ENCODE measurements at regions of chr1 and their contacts with region 1.

Region 1: DNA sequence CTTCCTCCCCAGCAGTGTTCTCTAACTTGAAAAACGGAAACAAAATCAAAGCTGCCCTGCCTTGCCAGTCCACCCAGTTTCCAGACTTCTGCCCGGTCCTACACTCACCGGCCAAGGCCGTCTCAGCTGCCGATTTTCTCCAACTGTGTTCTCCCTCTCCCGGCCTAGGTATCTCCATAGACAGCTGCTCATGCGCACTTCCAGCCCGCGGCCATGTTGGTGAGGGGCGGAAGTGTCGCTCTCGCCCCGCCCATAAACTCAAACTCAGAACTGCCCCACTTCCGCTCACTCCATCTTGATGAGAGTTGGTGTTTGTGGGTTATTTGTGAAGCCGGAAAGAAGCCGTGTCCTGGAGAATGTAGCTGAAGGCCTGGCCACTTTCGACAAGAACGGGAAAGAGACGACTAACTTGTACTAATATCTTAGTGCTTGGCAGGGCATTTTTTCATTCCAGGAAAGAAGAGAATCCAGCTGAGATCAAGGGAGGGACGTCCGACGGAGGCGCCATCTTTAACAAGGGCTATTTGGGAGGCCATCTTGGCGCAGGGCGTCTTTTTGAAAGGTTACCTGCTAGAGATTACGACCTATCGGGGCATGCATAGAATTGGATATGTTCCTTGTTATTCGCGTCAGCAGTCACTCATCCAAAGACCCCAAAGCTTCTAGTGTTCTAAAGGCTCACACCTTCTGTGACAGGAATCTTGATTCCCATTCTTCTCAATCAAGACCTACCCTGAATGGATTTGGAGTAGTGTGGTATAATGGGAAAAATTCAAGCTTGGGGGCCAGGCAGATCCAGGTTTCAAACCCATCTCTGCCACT is at the start of gene USF1:
- DNase-seq: peak; percentile 94 to 95 (median 95)
- H3K4me3 ChIP-seq: peak within 1 kb of the TSS; percentile 62 to 89
- H3K4me3 Mint-ChIP-seq: peak within 1 kb of the TSS; percentile 87 to 99 (median 94)
- H3K27ac ChIP-seq: peak within 1 kb of the TSS; percentile 91
- H3K27ac Mint-ChIP-seq: peak within 1 kb of the TSS; percentile 90 to 100 (median 99)
- H3K4me1 ChIP-seq: peaks cover 39% of the 10 kb centered on the region
- H3K4me1 Mint-ChIP-seq: peaks cover 29 to 58% (median 42%) of the 10 kb centered on the region in 4 donors
- H3K27me3 ChIP-seq: no peaks in the 10 kb centered on the region
- H3K27me3 Mint-ChIP-seq: no peaks in the 10 kb centered on the region
- total RNA-seq, gene USF1: 101 to 102 TPM

Region 2: GRCh38 chr1:160726498-160727315 is 319.3 kb before region 1 on chr1:
- CTCF ChIA-PET with region 1: no interaction called
- POLR2A ChIA-PET with region 1: no interaction called
- intact Hi-C with region 1: no loop called
- DNase-seq: peak; percentile 67 to 76 (median 74)
- H3K4me3 ChIP-seq: no peak overlapping the region
- H3K4me3 Mint-ChIP-seq: no peak overlapping the region
- H3K27ac ChIP-seq: no peak overlapping the region
- H3K27ac Mint-ChIP-seq: no peak overlapping the region
- H3K4me1 ChIP-seq: peaks cover 24% of the 10 kb centered on the region
- H3K4me1 Mint-ChIP-seq: peaks cover 11 to 20% (median 15%) of the 10 kb centered on the region in 4 donors
- H3K27me3 ChIP-seq: no peaks in the 10 kb centered on the region
- H3K27me3 Mint-ChIP-seq: no peaks in the 10 kb centered on the region

Region 3: DNA sequence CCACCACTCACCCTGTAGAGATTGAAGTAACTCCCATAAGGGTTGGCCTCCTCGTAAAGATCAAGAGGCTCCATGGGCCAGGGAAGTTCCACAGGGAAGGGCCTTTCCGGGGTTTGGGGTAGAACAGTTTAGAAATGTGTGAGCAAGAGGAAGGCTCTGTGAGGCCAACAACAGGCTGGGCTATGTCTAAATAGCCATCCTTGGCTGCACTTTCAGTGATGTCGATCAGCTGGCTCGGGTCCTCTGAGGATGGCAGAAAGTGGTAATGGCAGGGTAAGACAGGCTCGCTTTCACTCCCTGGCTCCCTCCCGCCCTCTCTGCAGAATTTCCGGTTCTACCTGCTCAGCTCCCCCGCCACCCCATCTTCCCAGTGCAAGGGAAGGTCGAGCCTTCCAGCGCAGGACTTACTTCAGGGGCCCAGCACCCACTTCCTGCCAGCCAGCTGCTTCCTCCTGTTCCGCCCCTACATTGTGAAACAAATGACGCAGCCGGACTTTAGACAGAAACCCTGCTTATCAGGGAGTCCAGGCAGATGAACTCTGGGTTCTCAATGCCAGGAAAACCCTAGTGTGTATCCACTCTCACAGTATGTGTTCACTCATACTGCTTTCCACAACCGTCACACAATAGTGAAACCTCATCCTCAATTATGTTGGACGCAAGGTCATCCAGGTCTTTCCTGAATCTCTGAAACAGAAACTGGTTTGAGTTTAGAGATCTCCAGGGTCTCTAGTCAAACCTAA is 32.3 kb before region 1 on chr1:
- CTCF ChIA-PET with region 1: interaction called, 42 read pairs
- POLR2A ChIA-PET with region 1: interaction called, 48 read pairs
- intact Hi-C with region 1: no loop called
- DNase-seq: peak; percentile 58 to 76 (median 63)
- H3K4me3 ChIP-seq: peak overlapping the region; percentile 14 to 53
- H3K4me3 Mint-ChIP-seq: peak overlapping the region; percentile 74 to 91 (median 84)
- H3K27ac ChIP-seq: peak overlapping the region; percentile 58
- H3K27ac Mint-ChIP-seq: peak overlapping the region; percentile 88 to 97 (median 94)
- H3K4me1 ChIP-seq: peaks cover 37% of the 10 kb centered on the region
- H3K4me1 Mint-ChIP-seq: peaks cover 24 to 56% (median 34%) of the 10 kb centered on the region in 4 donors
- H3K27me3 ChIP-seq: no peaks in the 10 kb centered on the region
- H3K27me3 Mint-ChIP-seq: no peaks in the 10 kb centered on the region

Region 4: GRCh38 chr1:161071886-161072371 is 26.0 kb after region 1 on chr1:
- CTCF ChIA-PET with region 1: interaction called, 171 read pairs
- POLR2A ChIA-PET with region 1: interaction called, 602 read pairs
- intact Hi-C with region 1: loop called (anchors 1 kb)
- DNase-seq: peak in 4 of 5 donors; percentile 35 to 39 (median 37)
- H3K4me3 ChIP-seq: no peak overlapping the region
- H3K4me3 Mint-ChIP-seq: peak overlapping the region in 1 of 8 donors; percentile 17
- H3K27ac ChIP-seq: no peak overlapping the region
- H3K27ac Mint-ChIP-seq: peak overlapping the region in 6 of 7 donors; percentile 68 to 92 (median 72)
- H3K4me1 ChIP-seq: peaks cover 30% of the 10 kb centered on the region
- H3K4me1 Mint-ChIP-seq: peaks cover 24 to 56% (median 33%) of the 10 kb centered on the region in 4 donors
- H3K27me3 ChIP-seq: no peaks in the 10 kb centered on the region
- H3K27me3 Mint-ChIP-seq: no peaks in the 10 kb centered on the region

Region 5: GRCh38 chr1:161132410-161133219 is 86.7 kb after region 1 on chr1 and contains the start of gene DEDD:
- CTCF ChIA-PET with region 1: interaction called, 3 read pairs
- POLR2A ChIA-PET with region 1: interaction called, 20 read pairs
- intact Hi-C with region 1: loop called (anchors 5 kb)
- DNase-seq: peak; percentile 92 to 95 (median 93)
- H3K4me3 ChIP-seq: peak within 1 kb of the TSS; percentile 80 to 100
- H3K4me3 Mint-ChIP-seq: peak within 1 kb of the TSS in 1 of 8 donors; percentile 91
- H3K27ac ChIP-seq: peak within 1 kb of the TSS; percentile 95
- H3K27ac Mint-ChIP-seq: peak within 1 kb of the TSS in 3 of 7 donors; percentile 91 to 99 (median 95)
- H3K4me1 ChIP-seq: peaks cover 51% of the 10 kb centered on the region
- H3K4me1 Mint-ChIP-seq: peaks cover 29 to 43% (median 40%) of the 10 kb centered on the region in 4 donors
- H3K27me3 ChIP-seq: no peaks in the 10 kb centered on the region
- H3K27me3 Mint-ChIP-seq: no peaks in the 10 kb centered on the region
- total RNA-seq, gene DEDD: 39.1 to 41.4 TPM

Region 6: GRCh38 chr1:161165742-161166668 is 120.0 kb after region 1 on chr1 and contains the start of gene PPOX:
- CTCF ChIA-PET with region 1: no interaction called
- POLR2A ChIA-PET with region 1: interaction called, 15 read pairs
- intact Hi-C with region 1: loop called (anchors 5 kb)
- DNase-seq: peak; percentile 95 to 98 (median 96)
- H3K4me3 ChIP-seq: peak within 1 kb of the TSS; percentile 73 to 77
- H3K4me3 Mint-ChIP-seq: peak within 1 kb of the TSS; percentile 89 to 96 (median 94)
- H3K27ac ChIP-seq: peak within 1 kb of the TSS; percentile 83
- H3K27ac Mint-ChIP-seq: peak within 1 kb of the TSS; percentile 96 to 100 (median 100)
- H3K4me1 ChIP-seq: peaks cover 37% of the 10 kb centered on the region
- H3K4me1 Mint-ChIP-seq: peaks cover 25 to 75% (median 45%) of the 10 kb centered on the region in 4 donors
- H3K27me3 ChIP-seq: no peaks in the 10 kb centered on the region
- H3K27me3 Mint-ChIP-seq: no peaks in the 10 kb centered on the region
- total RNA-seq, gene PPOX: 59.4 to 69.8 TPM

Measured in CD4-positive, alpha-beta memory T cell (primary cell).